ENCODE measurements at regions of chr20 and their contacts with region 1.

Region 1: DNA sequence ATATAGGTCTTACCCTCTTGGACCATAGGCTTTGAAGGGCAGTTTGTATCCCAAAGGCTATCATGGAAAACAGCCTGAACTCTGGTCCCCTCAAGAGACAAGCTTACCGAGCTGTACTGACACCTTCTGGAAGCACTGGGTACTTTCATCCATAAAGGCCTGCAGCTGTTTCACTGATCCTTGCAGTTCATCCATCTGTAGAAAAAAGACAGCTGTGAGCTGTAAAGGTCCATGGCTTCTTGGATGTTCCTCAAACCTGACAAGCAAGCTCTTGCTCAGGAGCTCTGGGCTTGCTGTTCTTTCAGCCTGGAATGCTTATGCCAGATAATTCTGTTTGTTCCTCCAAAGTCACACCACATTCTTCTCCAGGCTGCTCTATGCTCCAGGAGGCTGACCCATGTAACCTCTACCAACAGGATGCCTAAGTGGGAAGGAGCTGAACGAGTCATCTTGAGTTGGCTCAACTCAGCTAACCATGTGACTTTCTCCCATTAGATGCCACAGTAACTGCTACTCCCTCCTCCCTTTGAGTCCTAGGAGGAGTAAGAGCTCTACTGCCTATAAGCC is 8.8 kb upstream of the NDRG3 start:
- DNase-seq: no peak
- ATAC-seq: peak; percentile 85
- H3K4me3 ChIP-seq: no peak overlapping the region
- H3K27ac ChIP-seq: 0 out of 2 replicates have a peak overlapping the region, but pooled peaks have one; percentile 20
- H3K4me1 ChIP-seq: peaks cover 13% of the 10 kb centered on the region
- H3K27me3 ChIP-seq: no peaks in the 10 kb centered on the region
- CTCF ChIP-seq: peak; percentile 77 to 81 (median 79)
- EP300 ChIP-seq: no peak
- POLR2A ChIP-seq: no peak
- RAD21 ChIP-seq: peak; percentile 76

Region 2: DNA sequence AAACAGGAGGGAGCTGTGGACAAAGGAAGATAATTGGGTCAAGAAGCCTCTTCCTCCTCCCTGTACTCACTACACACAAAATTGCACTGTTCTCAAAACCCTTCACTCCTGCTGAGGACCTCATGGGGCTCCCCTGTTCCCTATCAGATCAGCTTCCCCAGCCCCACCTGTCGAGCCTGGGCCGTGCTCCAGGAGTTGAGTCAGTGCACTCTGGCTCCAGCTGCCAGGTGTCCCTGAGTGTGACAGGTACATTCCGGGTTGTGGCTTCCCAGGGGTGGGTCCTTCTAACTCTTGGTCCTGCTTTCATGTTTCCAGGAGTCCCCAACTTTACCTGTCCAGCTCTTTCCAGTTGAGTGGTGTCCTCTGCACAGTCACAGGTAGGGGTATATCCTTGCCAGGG is 140.8 kb before region 1 on chr20:
- CTCF ChIA-PET with region 1: interaction called, 67 read pairs
- POLR2A ChIA-PET with region 1: interaction called, 5 read pairs
- RAD21 ChIA-PET with region 1: interaction called, 6 read pairs
- SMC1A ChIA-PET with region 1: interaction called, 19 read pairs
- in situ Hi-C with region 1: no loop called
- intact Hi-C with region 1: loop called (anchors 1 kb)
- DNase-seq: no peak
- ATAC-seq: no peak
- H3K4me3 ChIP-seq: no peak overlapping the region
- H3K27ac ChIP-seq: no peak overlapping the region
- H3K4me1 ChIP-seq: no peaks in the 10 kb centered on the region
- H3K27me3 ChIP-seq: no peaks in the 10 kb centered on the region
- CTCF ChIP-seq: no peak
- EP300 ChIP-seq: no peak
- POLR2A ChIP-seq: peak; percentile 35; the same call in 1 of the 2 replicates
- RAD21 ChIP-seq: no peak

Region 3: DNA sequence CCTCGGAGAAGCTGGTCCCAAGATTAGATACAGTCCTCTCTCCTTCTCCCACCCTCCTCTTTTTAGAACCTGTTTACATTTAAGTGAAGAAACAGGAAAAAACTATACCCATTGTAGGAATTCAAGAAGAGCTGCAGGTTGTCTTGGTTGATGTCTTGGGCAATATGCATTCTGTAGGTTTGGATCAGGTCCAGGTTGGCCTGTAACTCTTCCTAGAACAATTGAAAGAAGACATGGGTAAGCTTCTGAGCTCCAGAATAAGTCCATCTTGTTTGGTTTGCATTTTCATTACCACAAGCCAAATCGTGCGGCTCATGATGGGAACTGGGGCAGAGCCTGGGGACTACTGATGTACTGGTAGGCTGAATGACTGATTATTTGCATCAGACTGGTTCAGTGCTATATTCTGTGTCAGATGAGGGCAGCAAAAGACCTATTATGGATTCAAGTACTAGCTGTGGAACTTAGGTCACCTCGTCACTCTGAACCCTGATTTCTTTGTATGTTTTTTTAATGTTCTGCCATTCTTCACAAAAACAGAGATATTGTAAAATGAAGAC is 88.5 kb before region 1 on chr20:
- CTCF ChIA-PET with region 1: interaction called, 10 read pairs
- POLR2A ChIA-PET with region 1: no interaction called
- RAD21 ChIA-PET with region 1: no interaction called
- SMC1A ChIA-PET with region 1: no interaction called
- in situ Hi-C with region 1: no loop called
- intact Hi-C with region 1: no loop called
- DNase-seq: no peak
- ATAC-seq: no peak
- H3K4me3 ChIP-seq: no peak overlapping the region
- H3K27ac ChIP-seq: no peak overlapping the region
- H3K4me1 ChIP-seq: no peaks in the 10 kb centered on the region
- H3K27me3 ChIP-seq: no peaks in the 10 kb centered on the region
- CTCF ChIP-seq: peak in 2 of 3 experiments; percentile 14 to 42; a peak in 2 of 6 replicates
- EP300 ChIP-seq: no peak
- POLR2A ChIP-seq: no peak
- RAD21 ChIP-seq: peak; percentile 38; the same call in 1 of the 2 replicates

Region 4: GRCh38 chr20:36688630-36689029 is 66.1 kb before region 1 on chr20:
- CTCF ChIA-PET with region 1: no interaction called
- POLR2A ChIA-PET with region 1: no interaction called
- RAD21 ChIA-PET with region 1: no interaction called
- SMC1A ChIA-PET with region 1: no interaction called
- in situ Hi-C with region 1: no loop called
- intact Hi-C with region 1: no loop called
- DNase-seq: no peak
- ATAC-seq: no peak
- H3K4me3 ChIP-seq: no peak overlapping the region
- H3K27ac ChIP-seq: no peak overlapping the region
- H3K4me1 ChIP-seq: no peaks in the 10 kb centered on the region
- H3K27me3 ChIP-seq: no peaks in the 10 kb centered on the region
- CTCF ChIP-seq: no peak
- EP300 ChIP-seq: no peak
- POLR2A ChIP-seq: no peak
- RAD21 ChIP-seq: no peak

Region 5: DNA sequence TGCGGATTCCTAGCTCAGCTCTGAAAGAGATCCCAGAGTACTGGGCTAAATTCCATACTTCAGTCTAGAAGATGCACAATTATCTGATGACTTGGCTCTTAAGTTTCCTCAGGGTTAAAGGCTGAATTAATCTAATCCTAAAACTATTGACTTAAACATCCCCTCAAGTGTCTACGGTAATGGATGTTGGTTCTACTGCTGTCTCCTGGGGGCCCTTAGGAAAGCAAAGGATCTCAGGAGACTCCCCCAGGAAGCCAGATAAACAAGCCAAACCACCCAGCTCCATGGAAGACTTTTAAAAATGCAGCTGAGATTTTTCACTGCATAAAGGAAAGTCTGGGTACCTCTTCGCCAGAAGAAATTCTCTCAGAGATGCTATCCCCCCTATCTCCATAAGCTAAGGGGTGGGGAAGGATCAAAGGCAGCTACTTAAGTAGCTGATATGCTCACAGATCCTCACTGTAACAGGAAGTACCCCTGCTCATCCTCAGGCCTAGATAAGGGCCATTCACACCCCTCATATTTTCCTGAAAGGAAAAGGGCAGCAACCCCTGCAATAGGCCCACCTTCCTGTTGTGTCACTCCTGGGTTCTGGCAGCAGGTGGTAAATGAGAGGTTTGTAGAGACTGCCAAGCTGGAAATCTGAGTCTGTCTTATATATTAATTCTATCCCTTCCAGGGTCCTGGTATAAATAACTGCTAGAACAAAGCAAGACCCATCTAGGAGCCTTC is 18.1 kb before region 1 on chr20:
- CTCF ChIA-PET with region 1: interaction called, 18 read pairs
- POLR2A ChIA-PET with region 1: no interaction called
- RAD21 ChIA-PET with region 1: interaction called, 4 read pairs
- SMC1A ChIA-PET with region 1: interaction called, 5 read pairs
- in situ Hi-C with region 1: no loop called
- intact Hi-C with region 1: no loop called
- DNase-seq: no peak
- ATAC-seq: no peak
- H3K4me3 ChIP-seq: no peak overlapping the region
- H3K27ac ChIP-seq: no peak overlapping the region
- H3K4me1 ChIP-seq: peaks cover 4% of the 10 kb centered on the region; the same call in 1 of the 2 replicates
- H3K27me3 ChIP-seq: no peaks in the 10 kb centered on the region
- CTCF ChIP-seq: no peak
- EP300 ChIP-seq: no peak
- POLR2A ChIP-seq: no peak
- RAD21 ChIP-seq: no peak

Region 6: DNA sequence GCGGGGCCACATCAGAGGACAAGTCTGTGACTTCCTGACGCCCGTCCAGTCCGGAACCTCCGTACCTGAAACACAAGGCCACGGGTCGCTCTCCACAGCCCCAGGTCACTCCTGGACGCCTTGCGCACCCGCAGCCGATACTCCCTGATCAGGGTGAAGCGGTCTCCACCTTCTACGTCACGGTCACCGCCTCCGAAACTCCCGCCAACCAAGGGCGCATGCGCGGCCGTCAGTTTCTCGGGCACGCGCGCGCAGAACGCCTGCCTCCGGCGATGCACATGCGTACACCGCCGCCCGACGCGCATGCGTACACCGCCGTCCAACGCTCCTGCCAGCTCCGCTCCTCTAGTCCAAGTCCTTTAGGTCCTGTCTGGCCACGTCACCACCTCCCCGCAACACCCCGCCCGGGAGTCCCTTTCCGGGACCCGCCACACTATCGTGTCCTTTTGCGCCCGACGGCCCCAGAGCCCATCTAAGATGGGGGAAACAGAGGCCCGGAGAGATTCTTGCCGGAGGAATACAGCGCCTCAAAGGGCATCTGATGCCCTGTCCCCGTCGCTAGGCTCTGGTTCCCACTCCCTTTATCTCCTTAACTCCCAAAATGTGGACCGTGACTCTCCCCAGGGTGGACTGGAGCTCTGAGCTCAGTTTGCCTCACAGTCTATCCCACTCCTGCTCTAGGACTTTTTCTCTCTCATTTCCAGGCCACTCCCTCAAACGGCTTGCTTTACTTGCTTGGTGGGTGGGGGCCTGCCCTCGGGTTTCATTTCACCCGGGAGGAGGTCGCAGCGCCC is 19.1 kb after region 1 on chr20 and contains the start of gene DSN1:
- CTCF ChIA-PET with region 1: interaction called, 32 read pairs
- POLR2A ChIA-PET with region 1: interaction called, 4 read pairs
- RAD21 ChIA-PET with region 1: interaction called, 8 read pairs
- SMC1A ChIA-PET with region 1: interaction called, 26 read pairs
- in situ Hi-C with region 1: no loop called
- intact Hi-C with region 1: no loop called
- DNase-seq: peak; percentile 92
- ATAC-seq: peak; percentile 92
- H3K4me3 ChIP-seq: peak within 1 kb of the TSS; percentile 93
- H3K27ac ChIP-seq: peak within 1 kb of the TSS; percentile 94
- H3K4me1 ChIP-seq: peaks cover 35% of the 10 kb centered on the region
- H3K27me3 ChIP-seq: no peaks in the 10 kb centered on the region
- CTCF ChIP-seq: peak in 2 of 3 experiments; percentile 43 to 59; a peak in 3 of 6 replicates
- EP300 ChIP-seq: no peak
- POLR2A ChIP-seq: peak; percentile 85; the same call in 1 of the 2 replicates
- RAD21 ChIP-seq: 0 out of 2 replicates have a peak, but pooled peaks have one; percentile 29
- polyA plus RNA-seq, gene DSN1: 21.2 to 21.4 TPM